Right cardiac atrium (tissue), 5 donors: ENCODE measurements at regions of chr18 and their contacts with region 1.

Region 1: DNA sequence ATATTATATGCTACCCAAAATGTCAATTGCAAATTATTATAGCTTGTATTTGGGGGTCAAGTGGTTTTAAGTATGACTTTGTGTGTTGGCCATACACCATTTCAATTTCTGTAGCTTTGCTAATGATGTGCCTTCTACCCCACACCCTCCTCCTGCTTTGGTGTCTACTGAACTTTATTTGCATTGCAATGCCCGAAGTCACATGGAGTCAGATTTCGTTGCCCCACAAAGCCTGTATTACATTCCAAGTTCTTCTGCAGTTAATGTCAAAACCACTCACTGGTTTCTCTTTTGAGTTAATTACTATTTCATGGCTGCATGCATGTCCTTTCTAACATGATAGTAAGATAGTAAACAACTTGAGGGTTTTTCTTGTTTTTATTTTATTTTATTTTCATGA is 528.9 kb downstream of the RIT2 start:
- DNase-seq: no peak
- ATAC-seq: no peak
- H3K4me3 ChIP-seq: no peak overlapping the region
- H3K27ac ChIP-seq: no peak overlapping the region
- H3K4me1 ChIP-seq: no peaks in the 10 kb centered on the region
- H3K27me3 ChIP-seq: no peaks in the 10 kb centered on the region

Region 2: GRCh38 chr18:42426496-42427015 is 160.0 kb before region 1 on chr18:
- intact Hi-C with region 1: no loop called
- DNase-seq: no peak
- ATAC-seq: no peak
- H3K4me3 ChIP-seq: no peak overlapping the region
- H3K27ac ChIP-seq: no peak overlapping the region
- H3K4me1 ChIP-seq: no peaks in the 10 kb centered on the region
- H3K27me3 ChIP-seq: no peaks in the 10 kb centered on the region

Region 3: GRCh38 chr18:42801706-42802105 is 215.1 kb after region 1 on chr18:
- intact Hi-C with region 1: no loop called
- DNase-seq: no peak
- ATAC-seq: no peak
- H3K4me3 ChIP-seq: no peak overlapping the region
- H3K27ac ChIP-seq: no peak overlapping the region
- H3K4me1 ChIP-seq: no peaks in the 10 kb centered on the region
- H3K27me3 ChIP-seq: no peaks in the 10 kb centered on the region

Region 4: GRCh38 chr18:43001821-43002220 is 415.2 kb after region 1 on chr18:
- intact Hi-C with region 1: no loop called
- DNase-seq: no peak
- ATAC-seq: no peak
- H3K4me3 ChIP-seq: no peak overlapping the region
- H3K27ac ChIP-seq: no peak overlapping the region
- H3K4me1 ChIP-seq: no peaks in the 10 kb centered on the region
- H3K27me3 ChIP-seq: no peaks in the 10 kb centered on the region

Region 5: GRCh38 chr18:43563780-43564179 is 977.2 kb after region 1 on chr18:
- intact Hi-C with region 1: loop called in 1 of 4 experiments (anchors 10 kb)
- DNase-seq: peak in 1 of 3 donors; percentile 43
- ATAC-seq: peak; percentile 57 to 72
- H3K4me3 ChIP-seq: no peak overlapping the region
- H3K27ac ChIP-seq: no peak overlapping the region
- H3K4me1 ChIP-seq: no peaks in the 10 kb centered on the region
- H3K27me3 ChIP-seq: no peaks in the 10 kb centered on the region